ENCODE measurements at regions of chr2 and their contacts with region 1.

Region 1: GRCh38 chr2:217988014-217988839 is 14.6 kb downstream of the TNS1 start:
- DNase-seq: peak; percentile 93 to 96
- H3K4me3 ChIP-seq: no peak overlapping the region
- H3K4me3 Mint-ChIP-seq: peak overlapping the region; percentile 43
- H3K27ac Mint-ChIP-seq: peak overlapping the region; percentile 36
- H3K4me1 ChIP-seq: peaks cover 15% of the 10 kb centered on the region
- H3K4me1 Mint-ChIP-seq: peaks cover 14% of the 10 kb centered on the region
- H3K27me3 ChIP-seq: no peaks in the 10 kb centered on the region
- H3K27me3 Mint-ChIP-seq: no peaks in the 10 kb centered on the region
- CTCF ChIP-seq: peak; percentile 84

Region 2: DNA sequence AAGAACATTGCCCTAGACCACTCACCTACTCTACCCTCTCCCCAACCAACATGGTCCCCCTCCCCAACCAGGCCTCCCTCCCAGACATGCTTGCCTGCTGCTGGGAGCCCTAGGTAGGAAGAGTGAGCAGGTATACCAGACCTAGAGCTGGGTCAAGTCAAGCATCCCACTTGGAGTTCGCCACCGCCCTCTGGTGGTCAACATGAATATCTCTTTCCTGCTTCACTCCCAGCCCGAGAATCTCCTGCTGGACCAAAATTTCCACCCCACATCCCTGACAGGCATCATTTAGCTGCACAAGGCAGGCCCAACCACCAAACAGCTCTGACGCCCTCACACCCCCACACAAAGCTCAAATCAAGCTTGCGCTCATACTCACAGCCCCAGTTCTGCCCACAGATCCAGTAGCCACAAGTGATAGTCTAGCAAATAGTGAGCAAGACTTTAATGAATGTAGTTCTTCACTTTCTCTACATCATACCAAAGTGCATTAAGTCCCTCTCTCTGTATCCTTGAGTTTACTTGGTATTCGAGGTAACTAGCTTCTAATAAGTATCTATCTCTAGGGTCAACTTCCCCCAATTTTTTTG is 101.4 kb before region 1 on chr2:
- CTCF ChIA-PET with region 1: interaction called, 7 read pairs
- POLR2A ChIA-PET with region 1: no interaction called
- intact Hi-C with region 1: loop called (anchors 1 kb)
- DNase-seq: peak; percentile 76 to 82
- H3K4me3 ChIP-seq: no peak overlapping the region
- H3K4me3 Mint-ChIP-seq: no peak overlapping the region
- H3K27ac Mint-ChIP-seq: no peak overlapping the region
- H3K4me1 ChIP-seq: no peaks in the 10 kb centered on the region
- H3K4me1 Mint-ChIP-seq: no peaks in the 10 kb centered on the region
- H3K27me3 ChIP-seq: no peaks in the 10 kb centered on the region
- H3K27me3 Mint-ChIP-seq: no peaks in the 10 kb centered on the region
- CTCF ChIP-seq: peak; percentile 83 to 87

Region 3: GRCh38 chr2:217899231-217900009 is 88.8 kb before region 1 on chr2:
- CTCF ChIA-PET with region 1: interaction called, 5 read pairs
- POLR2A ChIA-PET with region 1: no interaction called
- intact Hi-C with region 1: loop called (anchors 1 kb)
- DNase-seq: peak; percentile 50 to 54
- H3K4me3 ChIP-seq: no peak overlapping the region
- H3K4me3 Mint-ChIP-seq: no peak overlapping the region
- H3K27ac Mint-ChIP-seq: peak overlapping the region; percentile 62
- H3K4me1 ChIP-seq: peaks cover 65% of the 10 kb centered on the region
- H3K4me1 Mint-ChIP-seq: peaks cover 23% of the 10 kb centered on the region
- H3K27me3 ChIP-seq: no peaks in the 10 kb centered on the region
- H3K27me3 Mint-ChIP-seq: no peaks in the 10 kb centered on the region
- CTCF ChIP-seq: peak in 1 of 2 experiments; percentile 63

Region 4: DNA sequence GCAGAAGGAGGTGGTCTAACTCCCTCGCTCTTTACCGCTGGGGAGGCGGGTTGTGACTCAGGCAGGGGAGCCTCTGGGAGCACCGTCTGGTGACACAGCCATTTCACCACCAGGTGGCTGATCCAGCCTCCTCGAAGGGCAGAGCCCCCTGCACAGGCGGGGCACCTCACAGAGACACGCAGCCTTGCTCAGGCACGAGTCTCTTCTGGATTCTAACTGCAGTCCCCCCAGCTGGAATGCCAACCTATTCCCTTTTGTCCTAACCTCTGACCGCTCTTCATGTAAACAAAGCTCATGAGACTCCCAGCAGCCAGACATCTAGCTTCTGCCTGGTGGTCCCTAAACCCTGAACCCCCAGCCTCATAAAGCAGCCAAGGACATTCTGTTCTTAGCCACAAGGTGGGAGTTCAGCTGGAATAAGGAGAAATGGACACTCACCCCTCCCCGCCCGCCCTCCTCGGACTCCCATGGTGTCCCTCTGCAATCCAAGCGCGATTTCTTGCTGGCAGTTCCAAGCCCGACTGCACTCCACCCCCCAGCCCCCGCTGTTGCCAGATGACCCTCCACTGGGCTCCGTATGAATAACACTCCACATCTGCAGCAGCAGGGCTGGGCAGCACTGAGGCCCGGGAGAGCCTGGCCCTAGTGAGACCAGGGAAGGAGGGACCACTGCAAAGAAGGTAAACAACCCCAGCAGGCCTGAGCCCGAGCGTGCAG is 69.8 kb before region 1 on chr2:
- CTCF ChIA-PET with region 1: no interaction called
- POLR2A ChIA-PET with region 1: no interaction called
- intact Hi-C with region 1: loop called (anchors 1 kb)
- DNase-seq: peak in 1 of 2 experiments; percentile 47
- H3K4me3 ChIP-seq: no peak overlapping the region
- H3K4me3 Mint-ChIP-seq: no peak overlapping the region
- H3K27ac Mint-ChIP-seq: no peak overlapping the region
- H3K4me1 ChIP-seq: no peaks in the 10 kb centered on the region
- H3K4me1 Mint-ChIP-seq: no peaks in the 10 kb centered on the region
- H3K27me3 ChIP-seq: no peaks in the 10 kb centered on the region
- H3K27me3 Mint-ChIP-seq: no peaks in the 10 kb centered on the region
- CTCF ChIP-seq: peak; percentile 40 to 44

Region 5: GRCh38 chr2:217934321-217935131 is 53.7 kb before region 1 on chr2:
- CTCF ChIA-PET with region 1: interaction called, 7 read pairs
- POLR2A ChIA-PET with region 1: no interaction called
- intact Hi-C with region 1: loop called (anchors 1 kb)
- DNase-seq: no peak
- H3K4me3 ChIP-seq: no peak overlapping the region
- H3K4me3 Mint-ChIP-seq: no peak overlapping the region
- H3K27ac Mint-ChIP-seq: no peak overlapping the region
- H3K4me1 ChIP-seq: no peaks in the 10 kb centered on the region
- H3K4me1 Mint-ChIP-seq: no peaks in the 10 kb centered on the region
- H3K27me3 ChIP-seq: no peaks in the 10 kb centered on the region
- H3K27me3 Mint-ChIP-seq: no peaks in the 10 kb centered on the region
- CTCF ChIP-seq: no peak

Region 6: DNA sequence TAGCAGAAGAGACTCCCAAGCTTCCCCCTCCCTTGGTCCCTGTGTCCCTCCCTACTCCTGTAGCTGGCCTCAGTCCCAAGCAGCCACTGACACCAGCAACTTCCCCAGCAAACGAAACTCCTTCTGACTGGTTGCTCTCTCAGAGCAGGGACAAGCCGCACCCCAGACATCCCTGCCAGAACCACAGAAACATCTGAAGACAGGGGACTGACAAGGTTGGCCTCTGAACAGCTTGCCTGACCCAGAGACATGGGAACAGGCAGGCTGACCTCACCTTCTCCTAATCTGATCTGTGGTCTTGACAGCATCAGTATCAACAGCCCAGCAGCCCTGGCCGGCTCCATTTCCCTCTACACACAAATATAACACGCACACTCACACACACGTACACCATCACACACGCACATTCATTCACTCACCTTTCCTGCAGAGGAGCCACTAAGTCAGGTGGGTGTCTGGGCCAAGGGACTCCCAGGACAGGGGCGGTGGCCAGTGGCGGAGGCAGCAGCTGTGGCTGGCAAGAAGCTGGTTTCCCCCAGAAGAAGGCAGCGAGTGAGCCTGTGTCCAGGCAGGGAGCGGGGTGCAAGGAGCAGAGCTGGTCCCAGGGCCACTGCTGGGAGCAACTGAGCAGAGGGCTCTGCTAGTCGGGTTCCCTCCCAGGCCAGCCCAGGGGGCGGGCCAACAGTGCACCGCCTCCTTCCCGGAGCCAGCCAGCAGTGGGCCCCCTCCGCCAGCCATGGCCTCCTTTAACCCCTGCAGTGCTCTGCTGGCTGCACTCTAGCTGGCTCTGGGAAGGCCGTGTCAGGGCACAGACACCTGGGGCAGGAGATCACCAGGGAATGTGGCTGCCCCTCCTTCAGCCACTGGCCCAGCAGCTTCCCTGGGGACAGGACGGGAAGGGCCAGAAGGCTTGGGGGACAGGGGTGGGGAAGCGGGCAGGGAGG is 44.5 kb before region 1 on chr2:
- CTCF ChIA-PET with region 1: interaction called, 20 read pairs
- POLR2A ChIA-PET with region 1: no interaction called
- intact Hi-C with region 1: loop called (anchors 1 kb)
- DNase-seq: peak; percentile 88 to 89
- H3K4me3 ChIP-seq: peak overlapping the region; percentile 48
- H3K4me3 Mint-ChIP-seq: peak overlapping the region; percentile 52
- H3K27ac Mint-ChIP-seq: no peak overlapping the region
- H3K4me1 ChIP-seq: peaks cover 35% of the 10 kb centered on the region
- H3K4me1 Mint-ChIP-seq: peaks cover 27% of the 10 kb centered on the region
- H3K27me3 ChIP-seq: no peaks in the 10 kb centered on the region
- H3K27me3 Mint-ChIP-seq: no peaks in the 10 kb centered on the region
- CTCF ChIP-seq: peak in 1 of 2 experiments; percentile 81

Region 7: DNA sequence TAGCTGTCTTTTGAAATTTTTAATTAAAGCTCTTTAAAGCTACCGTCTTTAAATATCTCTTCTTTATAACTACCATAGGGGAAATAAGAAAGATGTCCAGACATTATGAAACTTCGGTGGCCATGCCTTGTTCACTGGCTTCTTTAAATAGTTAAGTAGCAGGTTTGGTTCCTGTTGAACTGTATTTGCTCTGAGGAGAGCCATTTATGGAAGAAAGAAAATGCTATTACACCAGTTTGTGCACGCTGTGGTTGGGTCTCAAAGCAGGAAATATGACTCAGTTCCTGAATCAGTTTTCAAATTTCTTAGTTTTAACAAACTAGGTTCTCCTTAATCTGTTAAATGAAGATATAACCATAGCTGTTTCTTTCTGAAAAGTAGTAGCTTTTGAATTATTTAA is 241.0 kb after region 1 on chr2:
- CTCF ChIA-PET with region 1: no interaction called
- POLR2A ChIA-PET with region 1: no interaction called
- intact Hi-C with region 1: no loop called
- DNase-seq: no peak
- H3K4me3 ChIP-seq: no peak overlapping the region
- H3K4me3 Mint-ChIP-seq: no peak overlapping the region
- H3K27ac Mint-ChIP-seq: no peak overlapping the region
- H3K4me1 ChIP-seq: peaks cover 40% of the 10 kb centered on the region
- H3K4me1 Mint-ChIP-seq: peaks cover 31% of the 10 kb centered on the region
- H3K27me3 ChIP-seq: no peaks in the 10 kb centered on the region
- H3K27me3 Mint-ChIP-seq: no peaks in the 10 kb centered on the region
- CTCF ChIP-seq: no peak

Region 8: GRCh38 chr2:218259123-218259961 is 271.1 kb after region 1 on chr2:
- CTCF ChIA-PET with region 1: no interaction called
- POLR2A ChIA-PET with region 1: no interaction called
- intact Hi-C with region 1: no loop called
- DNase-seq: no peak
- H3K4me3 ChIP-seq: no peak overlapping the region
- H3K4me3 Mint-ChIP-seq: no peak overlapping the region
- H3K27ac Mint-ChIP-seq: peak overlapping the region; percentile 50
- H3K4me1 ChIP-seq: peaks cover 9% of the 10 kb centered on the region
- H3K4me1 Mint-ChIP-seq: peaks cover 5% of the 10 kb centered on the region
- H3K27me3 ChIP-seq: no peaks in the 10 kb centered on the region
- H3K27me3 Mint-ChIP-seq: no peaks in the 10 kb centered on the region
- CTCF ChIP-seq: no peak

Measured in Caco-2 (cell line).